Adrenal gland (tissue), 19 donors: ENCODE measurements at regions of chr12 and their contacts with region 1.

Region 1: DNA sequence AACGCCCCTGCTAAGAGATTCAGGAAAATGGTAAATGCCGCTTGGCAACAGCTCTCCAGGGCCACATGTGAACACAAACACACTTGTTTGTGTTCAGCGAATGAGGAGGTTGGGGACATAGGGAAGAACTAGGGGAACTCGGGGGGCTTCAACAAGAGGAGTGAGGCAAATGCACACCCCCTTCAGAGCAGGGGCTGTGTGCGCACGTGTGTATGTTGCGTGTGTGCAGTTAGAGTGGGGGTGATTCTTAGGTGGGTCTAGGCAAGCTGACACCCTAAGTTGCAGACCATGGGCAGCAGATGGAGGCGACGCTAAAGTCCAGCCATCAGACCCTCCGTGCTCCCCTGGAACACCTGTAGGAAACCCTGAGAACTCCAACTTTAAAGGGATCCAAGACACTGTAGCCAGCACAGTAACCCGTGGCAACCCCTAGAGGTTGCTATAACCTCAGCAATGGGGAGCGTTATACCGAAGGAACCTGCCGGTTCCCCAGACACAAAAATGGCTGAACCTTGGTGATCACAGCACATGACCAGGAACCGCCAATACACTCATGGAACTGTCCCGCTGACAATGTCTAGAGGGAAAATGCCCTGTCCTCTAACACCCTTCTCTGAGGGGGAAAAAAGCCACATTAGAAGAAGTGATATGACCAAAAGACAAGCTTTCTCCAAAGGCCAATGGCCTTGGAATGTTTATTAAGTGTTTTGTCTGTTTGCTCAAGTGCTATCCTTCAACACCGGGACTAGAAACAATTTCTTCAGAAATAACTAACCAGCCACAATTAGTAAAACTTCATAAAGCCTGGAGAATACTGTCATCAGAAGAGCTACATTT is 86.5 kb upstream of the CEP83 start:
- DNase-seq: peak; percentile 68 to 86 (median 76)
- H3K4me3 ChIP-seq: no peak overlapping the region
- H3K27ac ChIP-seq: no peak overlapping the region
- H3K4me1 ChIP-seq: peaks cover 0 to 4% of the 10 kb centered on the region in 2 donors
- H3K27me3 ChIP-seq: no peaks in the 10 kb centered on the region
- CTCF ChIP-seq: peak; percentile 64 to 95 (median 92)
- POLR2A ChIP-seq: no peak

Region 2: GRCh38 chr12:94762259-94762942 is 216.2 kb after region 1 on chr12:
- intact Hi-C with region 1: loop called in 1 of 2 experiments (anchors 5 kb)
- DNase-seq: no peak
- H3K4me3 ChIP-seq: no peak overlapping the region
- H3K27ac ChIP-seq: no peak overlapping the region
- H3K4me1 ChIP-seq: no peaks in the 10 kb centered on the region
- H3K27me3 ChIP-seq: no peaks in the 10 kb centered on the region
- CTCF ChIP-seq: no peak
- POLR2A ChIP-seq: no peak